ENCODE measurements at regions of chr2 and their contacts with region 1.

Region 1: DNA sequence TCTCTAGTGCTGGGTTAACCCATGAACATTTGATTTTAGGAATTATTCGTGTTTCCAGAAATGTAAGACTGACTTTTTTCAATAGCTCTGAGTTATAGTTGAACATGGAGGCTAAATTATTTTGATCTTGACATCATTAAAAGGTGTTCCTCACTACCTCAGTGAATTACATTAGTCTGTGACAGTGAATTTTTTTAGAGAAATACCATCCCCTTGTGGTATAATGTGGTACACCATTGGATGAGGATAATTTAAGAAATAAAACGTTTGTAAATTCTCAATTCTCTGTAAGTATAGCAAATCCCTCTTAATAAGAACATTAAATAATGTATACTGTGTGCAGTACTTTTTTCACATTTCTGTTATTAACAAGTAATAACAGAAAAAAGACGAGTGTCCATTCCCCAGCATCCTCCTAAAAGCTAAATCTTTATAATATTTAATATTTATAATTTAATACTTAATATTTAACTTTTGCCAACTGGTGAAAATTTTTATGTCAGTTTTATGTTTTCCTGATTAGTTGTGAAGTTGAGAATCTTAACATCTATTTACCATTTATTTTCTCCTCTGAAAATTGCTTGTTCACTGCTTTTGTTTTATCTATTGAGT is 70.3 kb upstream of the CWC22 start:
- DNase-seq: peak; percentile 15
- ATAC-seq: peak; percentile 69
- H3K4me3 ChIP-seq: no peak overlapping the region
- H3K27ac ChIP-seq: no peak overlapping the region
- H3K4me1 ChIP-seq: no peaks in the 10 kb centered on the region
- H3K27me3 ChIP-seq: no peaks in the 10 kb centered on the region
- CTCF ChIP-seq: peak; percentile 62 to 83 (median 69); a peak in 5 of 6 replicates
- POLR2A ChIP-seq: no peak
- RAD21 ChIP-seq: peak; percentile 80

Region 2: GRCh38 chr2:179422037-179422643 is 655.3 kb before region 1 on chr2:
- CTCF ChIA-PET with region 1: interaction called, 4 read pairs
- POLR2A ChIA-PET with region 1: no interaction called
- RAD21 ChIA-PET with region 1: no interaction called
- intact Hi-C with region 1: loop called (anchors 5 kb)
- DNase-seq: peak; percentile 58
- ATAC-seq: peak; percentile 93
- H3K4me3 ChIP-seq: no peak overlapping the region
- H3K27ac ChIP-seq: no peak overlapping the region
- H3K4me1 ChIP-seq: no peaks in the 10 kb centered on the region
- H3K27me3 ChIP-seq: no peaks in the 10 kb centered on the region
- CTCF ChIP-seq: peak; percentile 76 to 89 (median 86)
- POLR2A ChIP-seq: no peak
- RAD21 ChIP-seq: peak; percentile 87

Region 3: GRCh38 chr2:179842498-179843153 is 234.8 kb before region 1 on chr2:
- CTCF ChIA-PET with region 1: no interaction called
- POLR2A ChIA-PET with region 1: no interaction called
- RAD21 ChIA-PET with region 1: no interaction called
- intact Hi-C with region 1: loop called (anchors 2 kb)
- DNase-seq: no peak
- ATAC-seq: no peak; the same call in 1 of the 2 replicates
- H3K4me3 ChIP-seq: no peak overlapping the region
- H3K27ac ChIP-seq: no peak overlapping the region
- H3K4me1 ChIP-seq: peaks cover 0 to 1% of the 10 kb centered on the region in 2 experiments; a peak in 2 of 4 replicates
- H3K27me3 ChIP-seq: no peaks in the 10 kb centered on the region
- CTCF ChIP-seq: peak; percentile 34 to 54 (median 42); a peak in 4 of 6 replicates
- POLR2A ChIP-seq: no peak
- RAD21 ChIP-seq: peak; percentile 60

Region 4: GRCh38 chr2:179927041-179927440 is 150.4 kb before region 1 on chr2:
- CTCF ChIA-PET with region 1: no interaction called
- POLR2A ChIA-PET with region 1: no interaction called
- RAD21 ChIA-PET with region 1: no interaction called
- intact Hi-C with region 1: loop called (anchors 5 kb)
- DNase-seq: no peak
- ATAC-seq: no peak
- H3K4me3 ChIP-seq: no peak overlapping the region
- H3K27ac ChIP-seq: no peak overlapping the region
- H3K4me1 ChIP-seq: no peaks in the 10 kb centered on the region
- H3K27me3 ChIP-seq: no peaks in the 10 kb centered on the region
- CTCF ChIP-seq: no peak
- POLR2A ChIP-seq: no peak
- RAD21 ChIP-seq: no peak

Region 5: DNA sequence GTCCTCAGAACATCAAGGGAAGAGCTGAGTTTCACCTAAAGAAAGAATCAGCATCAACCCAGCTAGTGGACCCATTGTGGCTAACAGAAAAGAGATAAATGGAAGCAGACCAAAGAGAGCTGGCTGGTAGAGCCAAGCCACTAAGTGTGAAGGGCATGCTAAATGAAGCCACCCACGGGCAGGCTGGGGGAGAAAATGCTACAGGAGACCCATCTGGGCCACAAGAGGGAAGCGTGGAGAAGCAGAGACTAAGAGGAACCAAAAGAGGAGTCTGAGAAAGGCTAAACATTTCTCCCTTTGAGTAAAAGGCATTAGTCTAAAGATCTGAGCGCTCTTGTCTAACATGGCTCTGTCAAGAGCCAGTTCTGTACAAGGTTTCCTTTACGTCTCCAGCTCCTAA is 86.1 kb before region 1 on chr2:
- CTCF ChIA-PET with region 1: no interaction called
- POLR2A ChIA-PET with region 1: no interaction called
- RAD21 ChIA-PET with region 1: no interaction called
- intact Hi-C with region 1: loop called (anchors 5 kb)
- DNase-seq: no peak
- ATAC-seq: peak; percentile 66
- H3K4me3 ChIP-seq: no peak overlapping the region
- H3K27ac ChIP-seq: no peak overlapping the region
- H3K4me1 ChIP-seq: no peaks in the 10 kb centered on the region
- H3K27me3 ChIP-seq: no peaks in the 10 kb centered on the region
- CTCF ChIP-seq: peak in 2 of 3 experiments; percentile 24 to 36; a peak in 3 of 6 replicates
- POLR2A ChIP-seq: no peak
- RAD21 ChIP-seq: no peak

Region 6: GRCh38 chr2:180115675-180116074 is 38.3 kb after region 1 on chr2:
- CTCF ChIA-PET with region 1: no interaction called
- POLR2A ChIA-PET with region 1: no interaction called
- RAD21 ChIA-PET with region 1: no interaction called
- intact Hi-C with region 1: no loop called
- DNase-seq: no peak
- ATAC-seq: no peak
- H3K4me3 ChIP-seq: no peak overlapping the region
- H3K27ac ChIP-seq: no peak overlapping the region
- H3K4me1 ChIP-seq: no peaks in the 10 kb centered on the region
- H3K27me3 ChIP-seq: no peaks in the 10 kb centered on the region
- CTCF ChIP-seq: no peak
- POLR2A ChIP-seq: no peak
- RAD21 ChIP-seq: no peak

Measured in HCT116 (cell line).